AG04450 (cell line): ENCODE measurements at regions of chr9 and their contacts with region 1.

Region 1: DNA sequence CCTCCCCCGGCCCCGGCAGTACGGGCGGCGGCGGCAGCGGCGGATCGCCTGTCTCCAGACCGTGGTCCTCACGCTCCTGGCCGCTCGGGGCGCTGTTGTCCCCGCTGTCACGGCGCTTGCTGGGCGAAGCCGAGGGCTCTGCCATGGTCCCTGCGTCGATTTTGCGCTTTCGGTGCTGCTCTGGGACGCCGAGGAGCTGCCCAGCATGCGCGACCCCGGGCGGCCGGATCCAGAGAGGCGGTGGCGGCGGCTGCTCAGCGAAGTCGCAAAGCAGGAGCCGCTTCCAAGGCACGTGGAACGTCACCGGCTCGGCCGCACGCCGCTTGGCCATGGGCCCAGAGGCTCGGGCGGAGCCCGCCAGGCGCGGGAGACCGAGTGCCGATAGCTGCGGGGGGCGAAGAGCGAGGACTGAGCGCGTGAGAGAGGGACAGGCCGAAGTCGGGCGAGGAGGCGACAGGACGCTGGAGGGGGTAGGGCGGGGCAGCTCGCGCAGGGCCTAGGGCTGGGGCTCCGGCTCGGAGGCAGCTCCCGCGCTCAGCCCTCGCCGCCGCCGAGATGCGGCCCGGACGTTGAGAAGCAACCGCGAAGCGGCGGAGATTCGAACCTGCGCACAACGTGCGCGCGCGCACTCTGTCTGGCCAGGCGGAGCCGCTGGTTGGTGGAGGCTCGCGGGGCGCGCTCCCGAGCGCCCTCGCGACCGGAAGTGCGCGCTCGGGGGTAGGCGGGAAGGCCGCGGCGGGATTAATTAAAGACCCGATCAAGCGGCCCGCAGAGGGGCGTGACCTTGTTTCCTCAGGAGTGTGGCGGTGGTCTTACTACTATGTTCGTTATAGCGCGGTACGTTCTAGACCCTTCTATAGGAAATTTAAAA is at the start of gene C9orf40:
- DNase-seq: peak; percentile 42
- H3K4me3 ChIP-seq: peak within 1 kb of the TSS; percentile 95
- H3K27ac ChIP-seq: peak within 1 kb of the TSS; percentile 67
- H3K27me3 ChIP-seq: no peaks in the 10 kb centered on the region
- CTCF ChIP-seq: peak; percentile 77
- polyA plus RNA-seq, gene C9orf40: 1.3 and 2.3 TPM in 2 replicates

Region 2: DNA sequence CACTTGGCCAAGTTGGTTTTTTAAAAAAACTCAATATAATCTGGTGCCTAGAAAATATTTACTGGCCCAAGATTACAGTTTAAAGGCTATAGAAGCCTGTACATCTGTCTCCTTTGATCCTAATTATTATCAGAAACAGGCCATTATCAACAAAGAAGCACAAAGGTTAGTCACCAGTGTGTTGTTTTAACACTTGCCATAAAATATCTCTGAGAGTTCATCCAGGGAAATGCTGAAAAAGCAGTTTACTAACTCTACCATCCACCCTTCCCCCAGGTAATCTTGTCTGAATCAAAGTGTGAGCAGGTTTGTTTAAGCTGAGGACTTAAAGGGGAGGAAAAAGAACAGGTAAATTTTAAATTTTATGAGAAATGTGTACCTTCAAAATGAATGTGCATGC is 51.5 kb before region 1 on chr9:
- CTCF ChIA-PET with region 1: no interaction called
- POLR2A ChIA-PET with region 1: no interaction called
- DNase-seq: no peak
- H3K4me3 ChIP-seq: no peak overlapping the region
- H3K27ac ChIP-seq: no peak overlapping the region
- H3K27me3 ChIP-seq: no peaks in the 10 kb centered on the region
- CTCF ChIP-seq: no peak

Region 3: DNA sequence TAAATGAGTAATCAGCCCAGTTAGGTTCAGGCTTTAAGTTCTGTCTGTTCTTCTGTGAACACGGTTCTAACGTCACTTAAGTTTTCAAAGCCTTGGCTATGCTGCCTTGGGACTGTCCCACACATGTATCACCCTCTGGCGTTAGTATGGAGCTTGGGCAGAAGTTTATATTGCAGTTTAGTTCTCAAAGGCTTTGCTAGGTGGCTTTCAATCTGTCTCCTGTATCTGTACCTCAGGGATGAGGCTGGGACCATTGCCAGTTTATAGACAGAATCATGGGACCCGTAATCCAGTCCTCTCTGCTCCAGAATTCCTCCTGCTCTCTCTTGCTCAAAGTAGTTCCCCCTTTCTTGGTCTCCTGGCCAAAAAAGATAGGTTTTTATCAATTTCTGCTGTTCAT is 11.9 kb before region 1 on chr9:
- CTCF ChIA-PET with region 1: interaction called, 48 read pairs
- POLR2A ChIA-PET with region 1: no interaction called
- DNase-seq: no peak
- H3K4me3 ChIP-seq: no peak overlapping the region
- H3K27ac ChIP-seq: no peak overlapping the region
- H3K27me3 ChIP-seq: no peaks in the 10 kb centered on the region
- CTCF ChIP-seq: no peak

Region 4: DNA sequence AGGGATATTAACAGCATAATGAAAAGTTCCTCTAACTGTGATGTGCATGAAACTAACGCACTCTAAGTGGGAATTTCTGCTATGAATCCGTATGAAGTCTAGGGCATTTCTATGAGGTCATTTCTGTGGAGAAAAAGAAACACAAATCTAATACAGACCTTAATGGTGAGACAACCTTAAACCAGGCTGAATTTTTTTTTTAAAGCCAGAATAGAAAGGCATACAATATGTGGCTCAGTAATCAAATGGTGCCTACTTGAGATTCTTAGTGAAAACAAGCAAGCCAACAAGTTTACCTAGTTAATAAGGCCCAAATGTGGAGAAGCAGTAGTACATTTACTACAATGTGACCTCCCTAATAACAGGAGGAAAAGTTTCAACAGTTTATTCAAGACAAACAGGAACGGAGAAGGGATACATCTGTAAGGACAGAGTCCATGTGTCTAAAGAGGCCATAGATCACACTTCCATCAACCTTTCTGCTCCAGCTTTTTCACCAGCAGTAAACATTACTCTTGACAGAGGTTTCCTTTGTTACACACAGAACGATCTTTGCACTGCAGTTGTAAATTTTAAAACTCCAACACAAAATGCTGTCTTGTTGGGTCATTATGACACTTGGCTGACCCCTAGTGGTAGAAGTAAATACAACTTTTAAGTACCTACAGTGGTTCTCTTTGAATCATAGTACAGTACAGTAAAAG is 49.4 kb after region 1 on chr9:
- CTCF ChIA-PET with region 1: interaction called, 41 read pairs
- POLR2A ChIA-PET with region 1: no interaction called
- DNase-seq: peak; percentile 78
- H3K4me3 ChIP-seq: no peak overlapping the region
- H3K27ac ChIP-seq: no peak overlapping the region
- H3K27me3 ChIP-seq: no peaks in the 10 kb centered on the region
- CTCF ChIP-seq: peak; percentile 72

Region 5: DNA sequence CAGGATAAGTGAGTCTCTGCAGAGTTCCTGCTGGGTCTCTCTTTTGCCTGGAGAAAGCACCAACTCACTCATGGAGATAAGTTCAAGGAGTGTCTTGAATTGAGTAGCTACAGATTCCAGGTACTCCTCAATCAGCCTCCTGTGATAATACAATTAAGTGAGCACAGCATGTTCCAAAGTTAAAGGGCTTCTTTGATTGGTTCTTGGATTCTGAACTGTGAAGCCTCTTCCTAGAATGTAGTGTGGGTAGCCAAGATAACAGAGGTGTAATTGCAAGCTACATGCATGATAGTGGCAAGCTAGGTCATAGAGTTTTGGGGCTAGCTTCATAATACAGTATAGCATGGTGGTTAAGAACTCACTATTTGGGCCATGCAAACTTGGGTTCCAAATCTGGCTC is 98.8 kb after region 1 on chr9:
- CTCF ChIA-PET with region 1: interaction called, 10 read pairs
- POLR2A ChIA-PET with region 1: no interaction called
- DNase-seq: no peak
- H3K4me3 ChIP-seq: no peak overlapping the region
- H3K27ac ChIP-seq: no peak overlapping the region
- H3K27me3 ChIP-seq: no peaks in the 10 kb centered on the region
- CTCF ChIP-seq: no peak

Region 6: GRCh38 chr9:75086853-75087677 is 134.5 kb after region 1 on chr9:
- CTCF ChIA-PET with region 1: interaction called, 16 read pairs
- POLR2A ChIA-PET with region 1: interaction called, 3 read pairs
- DNase-seq: no peak
- H3K4me3 ChIP-seq: peak overlapping the region; percentile 98
- H3K27ac ChIP-seq: peak overlapping the region; percentile 57
- H3K27me3 ChIP-seq: no peaks in the 10 kb centered on the region
- CTCF ChIP-seq: no peak